Activated CD8-positive, alpha-beta memory T cell treated with anti-CD3 and anti-CD28 coated beads, Interleukin-2, amount 10 ng/mL, durations not matched to agents 7 days and 5 days (primary cell): ENCODE measurements at regions of chr2 and their contacts with region 1.

Region 1: DNA sequence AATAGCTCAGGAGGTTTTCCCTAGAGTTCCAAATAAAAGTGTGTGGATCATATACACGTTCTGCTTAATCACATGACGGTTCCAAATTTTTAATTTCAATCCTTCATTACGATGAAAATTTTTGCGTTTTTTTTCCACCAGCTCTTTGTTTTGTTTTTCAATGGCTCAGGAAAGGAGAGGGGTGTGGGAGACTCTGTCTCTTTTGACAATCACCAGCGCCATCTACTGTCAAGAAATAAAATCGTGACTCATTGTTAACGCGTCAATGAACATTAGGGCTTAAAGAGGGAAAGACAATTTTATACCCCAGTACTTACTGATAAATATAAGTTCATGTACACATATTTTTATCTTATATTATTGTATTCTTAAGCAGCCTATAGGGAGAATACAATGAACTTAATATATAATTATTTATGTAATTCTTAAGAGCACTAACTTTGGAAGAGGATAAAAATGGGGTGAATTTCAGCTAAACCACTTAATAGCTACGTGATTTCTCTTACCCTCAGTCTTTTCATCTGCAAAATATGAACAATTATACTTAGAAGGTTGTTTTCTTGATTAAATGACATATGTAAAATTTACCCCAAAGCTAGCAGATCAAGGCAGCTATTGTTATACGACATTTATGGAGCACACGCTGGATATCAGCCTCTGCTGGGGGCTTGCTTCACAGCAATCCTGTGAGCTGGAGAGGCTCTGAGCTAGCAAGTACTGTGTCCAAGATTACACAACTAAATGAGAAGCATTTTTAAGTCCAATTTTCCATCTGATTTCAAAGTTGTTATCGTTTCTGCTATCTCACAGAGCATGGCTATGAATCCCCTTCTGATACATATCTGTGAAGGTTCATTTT is 47.4 kb upstream of the RMDN2 start:
- DNase-seq: no peak
- ATAC-seq: peak; percentile 72
- H3K4me3 Mint-ChIP-seq: no peak overlapping the region
- H3K27ac Mint-ChIP-seq: no peak overlapping the region
- H3K4me1 Mint-ChIP-seq: peaks cover 12% of the 10 kb centered on the region
- H3K27me3 Mint-ChIP-seq: peaks cover 14% of the 10 kb centered on the region

Region 2: GRCh38 chr2:37402636-37403035 is 475.1 kb before region 1 on chr2:
- CTCF ChIA-PET with region 1: interaction called, 126 read pairs
- DNase-seq: no peak
- ATAC-seq: no peak
- H3K4me3 Mint-ChIP-seq: no peak overlapping the region
- H3K27ac Mint-ChIP-seq: no peak overlapping the region
- H3K4me1 Mint-ChIP-seq: no peaks in the 10 kb centered on the region
- H3K27me3 Mint-ChIP-seq: peaks cover 18% of the 10 kb centered on the region

Region 3: DNA sequence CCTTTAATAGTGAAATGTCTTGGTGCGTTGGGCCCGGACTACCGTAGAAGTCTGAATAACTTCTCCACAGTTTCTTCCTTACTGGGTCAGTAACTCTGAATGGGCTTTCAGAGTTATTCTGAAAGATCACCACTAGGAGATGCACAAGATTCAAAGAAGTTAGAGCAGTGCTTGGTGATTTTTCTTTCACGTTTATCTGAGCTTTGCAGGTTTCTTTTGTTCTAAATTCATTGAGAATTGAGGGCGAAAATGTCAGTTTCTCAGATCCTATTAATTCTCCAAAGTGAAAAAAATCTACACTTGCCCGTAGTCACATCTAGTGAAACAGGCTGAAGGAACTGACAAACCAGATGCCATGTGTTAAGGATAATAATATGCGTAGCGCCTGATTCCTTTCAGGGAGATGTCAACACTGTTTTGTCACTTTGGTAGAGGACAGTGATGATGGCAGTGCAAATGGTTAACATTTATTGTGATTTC is 463.2 kb before region 1 on chr2:
- CTCF ChIA-PET with region 1: interaction called, 51 read pairs
- DNase-seq: no peak
- ATAC-seq: peak; percentile 64
- H3K4me3 Mint-ChIP-seq: no peak overlapping the region
- H3K27ac Mint-ChIP-seq: no peak overlapping the region
- H3K4me1 Mint-ChIP-seq: peaks cover 5% of the 10 kb centered on the region
- H3K27me3 Mint-ChIP-seq: peaks cover 7% of the 10 kb centered on the region

Region 4: DNA sequence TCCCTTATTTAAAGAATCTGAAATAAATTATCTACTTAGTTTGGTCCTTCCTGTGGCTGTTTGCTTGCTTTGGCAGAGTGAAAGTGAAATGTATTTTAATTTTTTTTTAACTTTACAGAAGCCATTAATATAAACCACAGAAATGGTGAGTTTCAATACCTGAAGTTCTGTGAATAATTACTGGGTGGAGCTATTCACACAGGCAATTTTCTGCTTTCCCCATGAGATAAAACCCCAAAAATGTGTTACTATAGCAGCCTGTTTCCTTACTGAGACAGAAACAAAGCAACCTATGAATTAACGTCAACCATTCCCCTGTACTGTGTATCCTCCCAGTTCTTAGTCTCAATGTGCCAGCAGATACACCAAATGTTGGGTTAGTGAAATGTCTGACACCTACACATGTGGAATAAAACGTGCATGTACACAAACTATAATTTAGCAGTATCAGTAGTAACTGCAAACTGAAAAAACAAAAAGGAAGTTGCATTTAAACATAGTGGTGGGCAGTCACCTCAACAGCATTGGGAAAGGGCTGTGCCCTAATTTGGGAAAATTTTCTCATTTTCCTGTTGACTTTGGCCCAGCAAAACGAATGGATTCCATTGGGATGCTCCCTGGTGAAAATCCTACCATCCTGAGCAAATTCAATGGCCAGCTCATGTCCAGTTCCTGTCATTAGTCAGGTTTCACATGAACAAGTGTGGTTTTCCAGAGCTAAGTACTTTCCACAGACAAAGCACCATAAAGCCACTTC is 25.7 kb before region 1 on chr2:
- CTCF ChIA-PET with region 1: interaction called, 34 read pairs
- DNase-seq: no peak
- ATAC-seq: peak; percentile 64
- H3K4me3 Mint-ChIP-seq: no peak overlapping the region
- H3K27ac Mint-ChIP-seq: peak overlapping the region; percentile 59
- H3K4me1 Mint-ChIP-seq: peaks cover 30% of the 10 kb centered on the region
- H3K27me3 Mint-ChIP-seq: no peaks in the 10 kb centered on the region